Body of pancreas (tissue), 4 donors: ENCODE measurements at regions of chr2 and their contacts with region 1.

Region 1: GRCh38 chr2:180125245-180125962 is 118.3 kb upstream of the CWC22 start:
- DNase-seq: peak; percentile 49 to 68 (median 62)
- ATAC-seq: peak; percentile 84
- H3K4me3 ChIP-seq: no peak overlapping the region
- H3K27ac ChIP-seq: no peak overlapping the region
- H3K4me1 ChIP-seq: no peaks in the 10 kb centered on the region
- H3K27me3 ChIP-seq: no peaks in the 10 kb centered on the region
- CTCF ChIP-seq: peak in 6 of 7 experiments; percentile 21 to 50 (median 32)
- POLR2A ChIP-seq: no peak

Region 2: GRCh38 chr2:180240774-180241173 is 115.4 kb after region 1 on chr2:
- intact Hi-C with region 1: no loop called
- DNase-seq: no peak
- ATAC-seq: no peak
- H3K4me3 ChIP-seq: no peak overlapping the region
- H3K27ac ChIP-seq: no peak overlapping the region
- H3K4me1 ChIP-seq: no peaks in the 10 kb centered on the region
- H3K27me3 ChIP-seq: no peaks in the 10 kb centered on the region
- CTCF ChIP-seq: no peak
- POLR2A ChIP-seq: no peak

Region 3: GRCh38 chr2:181466661-181467576 is 1341.5 kb after region 1 on chr2:
- intact Hi-C with region 1: loop called (anchors 10 kb)
- DNase-seq: peak; percentile 55 to 77 (median 67)
- ATAC-seq: no peak
- H3K4me3 ChIP-seq: no peak overlapping the region
- H3K27ac ChIP-seq: no peak overlapping the region
- H3K4me1 ChIP-seq: no peaks in the 10 kb centered on the region
- H3K27me3 ChIP-seq: no peaks in the 10 kb centered on the region
- CTCF ChIP-seq: peak; percentile 45 to 81 (median 56)
- POLR2A ChIP-seq: no peak

Region 4: GRCh38 chr2:181715033-181715630 is 1589.7 kb after region 1 on chr2:
- intact Hi-C with region 1: loop called (anchors 5 kb)
- DNase-seq: peak; percentile 72 to 83 (median 79)
- ATAC-seq: peak; percentile 80
- H3K4me3 ChIP-seq: no peak overlapping the region
- H3K27ac ChIP-seq: no peak overlapping the region
- H3K4me1 ChIP-seq: no peaks in the 10 kb centered on the region
- H3K27me3 ChIP-seq: no peaks in the 10 kb centered on the region
- CTCF ChIP-seq: peak; percentile 51 to 83 (median 70)
- POLR2A ChIP-seq: no peak